HepG2 (cell line): ENCODE measurements at regions of chr2 and their contacts with region 1.

Region 1: GRCh38 chr2:216692636-216693413 is 2.5 kb downstream of the IGFBP5 start:
- DNase-seq: no peak
- ATAC-seq: no peak
- H3K4me3 ChIP-seq: no peak overlapping the region
- H3K27ac ChIP-seq: no peak overlapping the region
- H3K4me1 ChIP-seq: no peaks in the 10 kb centered on the region
- H3K27me3 ChIP-seq: peaks cover 30 to 80% of the 10 kb centered on the region in 2 experiments
- CTCF ChIP-seq: no peak
- EP300 ChIP-seq: no peak
- POLR2A ChIP-seq: no peak
- RAD21 ChIP-seq: no peak

Region 2: DNA sequence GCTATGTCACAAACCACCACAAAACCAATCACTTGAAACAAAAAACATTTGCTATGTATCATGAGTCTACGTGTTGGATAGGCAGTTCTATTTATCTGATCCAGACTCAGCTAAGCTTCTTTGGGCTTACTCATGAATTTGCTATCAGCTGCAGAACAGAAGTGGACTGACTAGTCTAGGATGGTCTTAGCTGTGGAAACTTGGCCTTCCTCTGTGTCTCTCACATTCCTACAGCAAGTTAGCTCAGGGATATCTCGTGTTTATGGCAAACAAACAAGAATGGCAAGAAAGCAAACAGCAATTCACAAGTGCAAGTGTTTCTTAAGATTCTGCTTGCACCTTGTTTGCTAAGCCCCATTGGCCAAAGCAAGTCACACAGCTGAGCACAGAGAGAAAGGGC is 455.0 kb after region 1 on chr2:
- CTCF ChIA-PET with region 1: interaction called, 22 read pairs
- POLR2A ChIA-PET with region 1: no interaction called
- in situ Hi-C with region 1: loop called (anchors 5 kb)
- intact Hi-C with region 1: no loop called
- DNase-seq: no peak
- ATAC-seq: no peak
- H3K4me3 ChIP-seq: no peak overlapping the region
- H3K27ac ChIP-seq: no peak overlapping the region
- H3K4me1 ChIP-seq: no peaks in the 10 kb centered on the region
- H3K27me3 ChIP-seq: peaks cover 0 to 8% of the 10 kb centered on the region in 2 experiments; a peak in 2 of 5 replicates
- CTCF ChIP-seq: no peak
- EP300 ChIP-seq: no peak
- POLR2A ChIP-seq: no peak
- RAD21 ChIP-seq: no peak